Prostate gland (tissue), 2 donors: ENCODE measurements at regions of chr6 and their contacts with region 1.

Region 1: GRCh38 chr6:36969988-36970891 is 15.7 kb downstream of the PI16 start:
- DNase-seq: no peak
- H3K4me3 ChIP-seq: no peak overlapping the region
- H3K27ac ChIP-seq: no peak overlapping the region
- H3K4me1 ChIP-seq: no peaks in the 10 kb centered on the region
- H3K27me3 ChIP-seq: no peaks in the 10 kb centered on the region
- CTCF ChIP-seq: no peak
- POLR2A ChIP-seq: no peak

Region 2: DNA sequence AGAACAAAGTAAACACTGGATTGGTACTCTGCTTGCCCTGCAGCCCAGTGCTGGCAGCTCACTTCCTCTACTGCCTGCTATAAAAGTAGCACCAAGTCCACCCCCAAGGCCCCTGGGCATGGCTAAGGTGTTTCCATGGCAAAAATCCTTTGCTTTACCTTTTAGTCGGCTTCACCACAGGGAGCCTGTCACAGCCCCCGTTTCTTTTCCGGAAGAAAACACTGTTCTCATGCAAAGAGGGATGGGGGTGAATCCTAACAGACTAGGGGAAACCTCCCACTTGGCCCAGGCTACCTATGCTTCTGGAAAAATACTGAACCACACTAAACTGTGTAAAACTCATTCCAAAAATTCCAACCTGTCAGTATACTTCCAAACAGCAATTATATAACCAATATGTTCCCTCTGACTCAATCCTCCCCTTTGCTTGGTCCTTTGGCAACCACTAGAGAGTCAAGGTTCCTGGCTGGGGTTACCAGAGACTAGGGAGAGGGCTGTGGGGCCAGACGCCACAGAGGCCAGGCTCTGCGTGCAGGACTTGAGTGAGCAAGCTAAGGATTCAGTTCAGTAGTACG is 111.7 kb before region 1 on chr6:
- intact Hi-C with region 1: no loop called
- DNase-seq: peak; percentile 25
- H3K4me3 ChIP-seq: peak overlapping the region in 1 of 2 donors; percentile 5
- H3K27ac ChIP-seq: peak overlapping the region; percentile 39 to 64
- H3K4me1 ChIP-seq: no peaks in the 10 kb centered on the region
- H3K27me3 ChIP-seq: no peaks in the 10 kb centered on the region
- CTCF ChIP-seq: no peak
- POLR2A ChIP-seq: no peak

Region 3: GRCh38 chr6:36917541-36918193 is 52.6 kb before region 1 on chr6:
- intact Hi-C with region 1: loop called (anchors 5 kb)
- DNase-seq: peak; percentile 53
- H3K4me3 ChIP-seq: no peak overlapping the region
- H3K27ac ChIP-seq: peak overlapping the region; percentile 66 to 81
- H3K4me1 ChIP-seq: peaks cover 12% of the 10 kb centered on the region
- H3K27me3 ChIP-seq: no peaks in the 10 kb centered on the region
- CTCF ChIP-seq: no peak
- POLR2A ChIP-seq: no peak

Region 4: GRCh38 chr6:37029249-37029971 is 59.2 kb after region 1 on chr6:
- intact Hi-C with region 1: no loop called
- DNase-seq: no peak
- H3K4me3 ChIP-seq: no peak overlapping the region
- H3K27ac ChIP-seq: no peak overlapping the region
- H3K4me1 ChIP-seq: no peaks in the 10 kb centered on the region
- H3K27me3 ChIP-seq: no peaks in the 10 kb centered on the region
- CTCF ChIP-seq: peak in 3 of 4 experiments; percentile 42 to 73 (median 56)
- POLR2A ChIP-seq: no peak